ENCODE measurements at regions of chr5 and their contacts with region 1.

Region 1: GRCh38 chr5:173887610-173888472 is at the start of gene CPEB4:
- DNase-seq: peak; percentile 100
- H3K4me3 Mint-ChIP-seq: peak within 1 kb of the TSS; percentile 97
- H3K27ac Mint-ChIP-seq: peak within 1 kb of the TSS; percentile 99
- H3K4me1 Mint-ChIP-seq: peaks cover 49% of the 10 kb centered on the region
- H3K27me3 Mint-ChIP-seq: no peaks in the 10 kb centered on the region
- CTCF ChIP-seq: no peak
- total RNA-seq, gene CPEB4: 86.7 and 99.0 TPM in 2 replicates

Region 2: GRCh38 chr5:173714551-173715428 is 173.1 kb before region 1 on chr5:
- CTCF ChIA-PET with region 1: no interaction called
- POLR2A ChIA-PET with region 1: interaction called, 6 read pairs
- intact Hi-C with region 1: loop called (anchors 1 kb)
- DNase-seq: peak; percentile 96
- H3K4me3 Mint-ChIP-seq: no peak overlapping the region
- H3K27ac Mint-ChIP-seq: peak overlapping the region; percentile 77
- H3K4me1 Mint-ChIP-seq: peaks cover 36% of the 10 kb centered on the region
- H3K27me3 Mint-ChIP-seq: no peaks in the 10 kb centered on the region
- CTCF ChIP-seq: no peak

Region 3: GRCh38 chr5:173789031-173789920 is 98.6 kb before region 1 on chr5:
- CTCF ChIA-PET with region 1: interaction called, 6 read pairs
- POLR2A ChIA-PET with region 1: interaction called, 38 read pairs
- intact Hi-C with region 1: no loop called
- DNase-seq: peak; percentile 98
- H3K4me3 Mint-ChIP-seq: no peak overlapping the region
- H3K27ac Mint-ChIP-seq: peak overlapping the region; percentile 77
- H3K4me1 Mint-ChIP-seq: peaks cover 53% of the 10 kb centered on the region
- H3K27me3 Mint-ChIP-seq: no peaks in the 10 kb centered on the region
- CTCF ChIP-seq: no peak

Region 4: GRCh38 chr5:173832386-173832785 is 55.5 kb before region 1 on chr5:
- CTCF ChIA-PET with region 1: interaction called, 3 read pairs
- POLR2A ChIA-PET with region 1: interaction called, 10 read pairs
- intact Hi-C with region 1: no loop called
- DNase-seq: no peak
- H3K4me3 Mint-ChIP-seq: no peak overlapping the region
- H3K27ac Mint-ChIP-seq: no peak overlapping the region
- H3K4me1 Mint-ChIP-seq: peaks cover 11% of the 10 kb centered on the region
- H3K27me3 Mint-ChIP-seq: no peaks in the 10 kb centered on the region
- CTCF ChIP-seq: no peak

Region 5: DNA sequence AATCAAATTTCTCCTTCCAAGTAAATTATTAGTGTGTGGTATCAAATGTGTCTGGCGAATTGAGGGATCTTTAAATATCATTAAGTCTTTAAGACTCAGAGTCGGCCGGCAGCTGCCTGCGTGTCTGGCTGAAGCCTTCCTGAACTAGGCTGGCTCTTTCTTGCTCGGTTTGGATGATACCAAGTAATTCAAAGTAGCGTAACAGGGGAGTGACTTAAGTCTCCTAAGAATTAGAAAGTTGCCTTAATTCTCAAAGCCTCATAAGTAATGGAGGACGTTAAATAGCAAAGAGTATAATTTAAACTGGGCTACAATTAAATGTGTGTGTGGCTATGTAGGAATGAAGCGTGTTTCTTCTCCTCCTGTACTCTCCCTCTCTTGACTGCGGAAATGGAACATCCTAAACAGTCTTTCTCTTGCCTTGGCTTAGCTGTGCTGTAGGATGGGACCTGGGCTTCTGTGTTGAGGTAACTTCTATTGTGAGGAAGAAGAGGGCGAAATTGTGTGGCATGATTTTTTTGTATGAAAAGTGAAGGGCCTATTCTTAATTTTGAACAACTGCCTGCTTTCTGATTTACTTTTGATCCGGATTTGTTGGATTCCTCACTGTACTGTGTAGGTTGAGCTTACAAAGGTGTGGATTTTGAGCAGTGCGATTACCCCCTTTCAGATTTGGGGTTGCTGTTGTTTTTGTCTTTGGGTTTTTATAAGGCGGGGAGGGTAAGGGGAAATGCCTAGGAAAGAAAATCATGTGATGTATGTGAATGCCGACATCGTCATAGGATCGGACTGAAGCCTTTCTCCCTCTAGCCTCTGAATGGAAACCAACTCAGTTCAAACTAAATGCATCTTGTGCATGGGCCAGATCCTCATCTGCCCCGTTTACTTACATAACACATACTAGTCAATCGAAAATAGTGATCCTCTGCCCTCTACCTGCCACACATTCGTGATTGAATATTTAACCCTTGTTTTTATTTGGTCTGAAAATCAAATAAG is 30.2 kb after region 1 on chr5:
- CTCF ChIA-PET with region 1: interaction called, 5 read pairs
- POLR2A ChIA-PET with region 1: interaction called, 149 read pairs
- intact Hi-C with region 1: loop called (anchors 2 kb)
- DNase-seq: peak; percentile 94
- H3K4me3 Mint-ChIP-seq: no peak overlapping the region
- H3K27ac Mint-ChIP-seq: no peak overlapping the region
- H3K4me1 Mint-ChIP-seq: peaks cover 8% of the 10 kb centered on the region
- H3K27me3 Mint-ChIP-seq: no peaks in the 10 kb centered on the region
- CTCF ChIP-seq: no peak